Upper lobe of right lung (tissue), 1 donor: ENCODE measurements at regions of chr17 and their contacts with region 1.

Region 1: GRCh38 chr17:18235743-18236256 is 10.4 kb downstream of the LLGL1 start:
- DNase-seq: no peak
- ATAC-seq: no peak
- H3K4me3 ChIP-seq: no peak overlapping the region
- H3K27ac ChIP-seq: no peak overlapping the region
- H3K4me1 ChIP-seq: no peaks in the 10 kb centered on the region
- H3K27me3 ChIP-seq: no peaks in the 10 kb centered on the region
- CTCF ChIP-seq: no peak

Region 2: DNA sequence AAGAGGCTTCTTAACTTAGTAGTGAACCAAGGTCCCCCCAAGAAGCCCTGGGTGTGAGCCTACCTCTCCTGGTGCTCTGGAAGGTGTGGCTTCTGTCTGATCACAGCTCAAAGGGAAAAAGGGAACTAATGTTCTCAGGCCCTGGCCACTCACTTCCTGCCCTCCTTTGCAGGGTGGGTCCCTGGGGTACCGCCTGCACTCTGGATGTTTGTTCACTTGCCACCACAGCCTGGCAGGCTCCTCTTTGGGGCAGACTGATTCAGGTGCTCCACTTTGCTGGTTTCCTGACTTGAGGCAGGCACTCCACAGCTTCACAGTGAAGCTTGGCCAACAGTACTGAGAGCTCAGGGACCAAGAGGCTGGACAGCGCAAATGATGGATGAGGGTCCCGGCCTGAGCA is 133.2 kb before region 1 on chr17:
- intact Hi-C with region 1: no loop called
- DNase-seq: no peak
- ATAC-seq: no peak
- H3K4me3 ChIP-seq: no peak overlapping the region
- H3K27ac ChIP-seq: no peak overlapping the region
- H3K4me1 ChIP-seq: no peaks in the 10 kb centered on the region
- H3K27me3 ChIP-seq: no peaks in the 10 kb centered on the region
- CTCF ChIP-seq: no peak

Region 3: DNA sequence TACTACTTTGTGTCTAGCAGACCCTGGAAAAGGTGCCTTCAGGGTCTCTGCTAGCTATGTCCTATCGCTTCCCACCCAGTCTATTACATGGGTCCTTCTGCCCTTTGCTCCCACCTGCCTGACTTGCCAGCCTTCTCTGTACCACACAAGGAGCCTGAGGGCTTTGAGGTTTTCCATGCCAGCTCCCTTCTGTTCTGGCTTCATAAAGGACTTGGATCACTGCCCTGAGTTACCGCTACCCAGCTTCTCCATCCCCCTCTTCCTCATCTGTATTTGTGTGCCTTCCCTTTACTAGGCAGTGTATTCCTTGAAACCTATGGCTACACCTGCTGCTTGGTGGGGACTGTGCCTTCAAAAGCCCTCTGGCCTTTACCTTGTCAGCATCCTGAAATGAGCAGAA is 29.9 kb before region 1 on chr17:
- intact Hi-C with region 1: loop called (anchors 2 kb)
- DNase-seq: no peak
- ATAC-seq: no peak
- H3K4me3 ChIP-seq: no peak overlapping the region
- H3K27ac ChIP-seq: no peak overlapping the region
- H3K4me1 ChIP-seq: no peaks in the 10 kb centered on the region
- H3K27me3 ChIP-seq: no peaks in the 10 kb centered on the region
- CTCF ChIP-seq: no peak

Region 4: GRCh38 chr17:18332909-18333489 is 97.2 kb after region 1 on chr17:
- intact Hi-C with region 1: no loop called
- DNase-seq: no peak
- ATAC-seq: no peak
- H3K4me3 ChIP-seq: no peak overlapping the region
- H3K27ac ChIP-seq: no peak overlapping the region
- H3K4me1 ChIP-seq: no peaks in the 10 kb centered on the region
- H3K27me3 ChIP-seq: no peaks in the 10 kb centered on the region
- CTCF ChIP-seq: no peak